ENCODE measurements at regions of chr17 and their contacts with region 1.

Region 1: DNA sequence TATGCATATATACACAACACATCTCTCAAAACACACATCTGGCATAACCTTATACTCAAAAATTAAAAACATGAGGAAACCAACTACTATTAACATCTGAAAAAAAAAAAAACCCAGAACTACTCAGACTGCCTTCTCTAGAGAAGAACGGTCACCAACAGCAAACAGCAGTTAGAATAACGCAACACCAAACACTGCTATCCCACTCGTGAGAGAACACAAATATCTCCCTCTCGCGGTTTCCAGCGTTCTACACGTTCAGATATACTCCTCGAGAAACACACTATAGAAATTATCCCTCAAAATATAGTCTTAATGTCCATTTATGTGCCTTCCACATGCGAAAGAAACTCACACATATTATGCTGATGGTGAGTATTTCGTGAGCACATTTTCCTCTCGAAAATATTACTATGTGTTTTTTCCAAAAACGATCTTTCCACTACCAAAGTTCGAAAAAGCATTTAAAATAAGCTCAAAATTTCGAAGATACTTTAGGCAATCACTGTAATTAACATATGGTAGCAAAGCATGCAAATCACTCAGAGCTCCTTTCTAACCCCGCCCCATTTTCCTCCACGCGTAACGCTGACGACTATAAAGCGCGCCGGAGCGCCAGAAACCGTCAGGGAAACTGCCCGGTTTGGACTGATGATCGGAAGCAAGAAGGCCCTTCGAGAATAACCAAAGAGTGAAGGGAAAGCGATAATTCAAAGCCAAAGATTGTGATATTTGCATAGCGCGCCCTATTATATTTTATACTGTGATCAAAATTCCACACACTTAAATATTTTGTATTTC is 60.1 kb downstream of the TEX14 start:
- DNase-seq: peak; percentile 96
- ATAC-seq: peak; percentile 91
- H3K4me3 Mint-ChIP-seq: no peak overlapping the region
- H3K27ac Mint-ChIP-seq: no peak overlapping the region
- H3K4me1 Mint-ChIP-seq: peaks cover 3% of the 10 kb centered on the region
- H3K27me3 Mint-ChIP-seq: no peaks in the 10 kb centered on the region
- CTCF ChIP-seq: no peak

Region 2: DNA sequence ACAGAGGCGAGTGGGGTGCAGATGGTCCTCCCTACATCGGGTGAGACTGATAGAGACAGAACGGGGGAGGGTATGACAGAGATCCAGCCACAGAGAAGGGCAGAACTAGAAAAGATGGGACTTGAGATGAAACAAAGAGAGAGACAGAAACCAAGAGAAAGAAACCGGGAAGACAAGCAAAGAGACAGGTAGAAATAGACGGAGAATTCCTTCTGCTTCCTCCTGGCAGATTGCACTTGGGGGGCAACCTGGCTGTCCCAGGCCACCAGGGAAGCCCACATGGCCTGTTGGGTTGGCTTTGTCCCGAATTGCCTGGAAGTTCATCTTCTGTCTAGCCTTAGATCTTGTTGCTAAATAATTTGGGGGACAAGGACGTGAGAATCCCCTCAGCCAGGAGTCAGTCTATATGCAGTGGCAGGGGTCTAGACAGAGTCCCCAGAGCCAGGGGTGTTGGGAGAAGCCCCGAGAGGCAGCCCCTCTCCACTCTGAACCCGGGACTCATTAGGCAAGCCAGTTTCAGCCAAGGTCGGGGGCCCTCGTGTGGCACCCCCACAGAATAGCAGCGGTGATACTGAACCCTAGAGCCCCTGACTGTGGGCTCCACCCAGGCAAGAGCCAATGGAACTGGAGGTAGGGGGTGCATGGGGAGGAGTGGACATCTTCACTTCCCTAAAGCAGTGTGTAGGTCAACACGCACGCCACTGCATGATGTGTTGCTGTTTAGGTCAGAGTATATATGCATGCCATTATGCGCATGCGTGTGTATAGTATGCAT is 302.5 kb before region 1 on chr17:
- CTCF ChIA-PET with region 1: no interaction called
- POLR2A ChIA-PET with region 1: interaction called, 19 read pairs
- intact Hi-C with region 1: loop called (anchors 10 kb)
- DNase-seq: peak; percentile 95
- ATAC-seq: peak; percentile 48
- H3K4me3 Mint-ChIP-seq: peak overlapping the region; percentile 81
- H3K27ac Mint-ChIP-seq: peak overlapping the region; percentile 96
- H3K4me1 Mint-ChIP-seq: peaks cover 40% of the 10 kb centered on the region
- H3K27me3 Mint-ChIP-seq: peaks cover 7% of the 10 kb centered on the region
- CTCF ChIP-seq: peak; percentile 57

Region 3: GRCh38 chr17:58531661-58532554 is 99.8 kb before region 1 on chr17:
- CTCF ChIA-PET with region 1: no interaction called
- POLR2A ChIA-PET with region 1: interaction called, 37 read pairs
- intact Hi-C with region 1: no loop called
- DNase-seq: peak; percentile 50
- ATAC-seq: peak; percentile 89
- H3K4me3 Mint-ChIP-seq: peak overlapping the region; percentile 53
- H3K27ac Mint-ChIP-seq: no peak overlapping the region
- H3K4me1 Mint-ChIP-seq: no peaks in the 10 kb centered on the region
- H3K27me3 Mint-ChIP-seq: peaks cover 39% of the 10 kb centered on the region
- CTCF ChIP-seq: no peak

Region 4: DNA sequence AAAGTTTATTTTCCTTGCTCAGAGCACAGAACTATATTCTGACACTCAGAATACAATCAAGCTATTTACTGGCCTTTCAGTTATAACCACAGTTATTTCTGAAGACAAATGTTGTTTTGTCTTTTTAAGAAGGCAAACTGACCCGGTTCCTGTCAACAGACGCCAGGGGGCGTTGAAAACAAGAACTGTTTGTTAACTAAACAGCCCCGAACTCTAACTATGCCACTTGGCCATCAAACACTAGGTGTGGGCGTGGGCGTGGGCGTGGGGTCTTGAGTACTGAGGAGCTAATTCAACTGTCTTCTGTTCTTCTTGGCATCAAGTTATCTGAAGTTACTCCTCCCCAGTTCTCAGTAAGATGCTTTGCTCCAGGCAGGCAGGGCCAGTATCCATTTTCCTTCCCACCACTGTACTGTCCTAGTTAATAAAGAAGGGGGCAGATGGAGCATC is 54.1 kb before region 1 on chr17:
- CTCF ChIA-PET with region 1: interaction called, 5 read pairs
- POLR2A ChIA-PET with region 1: interaction called, 17 read pairs
- intact Hi-C with region 1: no loop called
- DNase-seq: peak; percentile 65
- ATAC-seq: no peak
- H3K4me3 Mint-ChIP-seq: no peak overlapping the region
- H3K27ac Mint-ChIP-seq: no peak overlapping the region
- H3K4me1 Mint-ChIP-seq: peaks cover 6% of the 10 kb centered on the region
- H3K27me3 Mint-ChIP-seq: no peaks in the 10 kb centered on the region
- CTCF ChIP-seq: peak; percentile 60

Region 5: GRCh38 chr17:58605470-58605869 is 26.3 kb before region 1 on chr17:
- CTCF ChIA-PET with region 1: interaction called, 4 read pairs
- POLR2A ChIA-PET with region 1: interaction called, 42 read pairs
- intact Hi-C with region 1: no loop called
- DNase-seq: no peak
- ATAC-seq: peak; percentile 45
- H3K4me3 Mint-ChIP-seq: no peak overlapping the region
- H3K27ac Mint-ChIP-seq: no peak overlapping the region
- H3K4me1 Mint-ChIP-seq: peaks cover 7% of the 10 kb centered on the region
- H3K27me3 Mint-ChIP-seq: no peaks in the 10 kb centered on the region
- CTCF ChIP-seq: no peak

Region 6: GRCh38 chr17:58648236-58648806 is 16.6 kb after region 1 on chr17:
- CTCF ChIA-PET with region 1: interaction called, 3 read pairs
- POLR2A ChIA-PET with region 1: interaction called, 85 read pairs
- intact Hi-C with region 1: no loop called
- DNase-seq: no peak
- ATAC-seq: peak; percentile 47
- H3K4me3 Mint-ChIP-seq: no peak overlapping the region
- H3K27ac Mint-ChIP-seq: no peak overlapping the region
- H3K4me1 Mint-ChIP-seq: no peaks in the 10 kb centered on the region
- H3K27me3 Mint-ChIP-seq: no peaks in the 10 kb centered on the region
- CTCF ChIP-seq: no peak

Region 7: DNA sequence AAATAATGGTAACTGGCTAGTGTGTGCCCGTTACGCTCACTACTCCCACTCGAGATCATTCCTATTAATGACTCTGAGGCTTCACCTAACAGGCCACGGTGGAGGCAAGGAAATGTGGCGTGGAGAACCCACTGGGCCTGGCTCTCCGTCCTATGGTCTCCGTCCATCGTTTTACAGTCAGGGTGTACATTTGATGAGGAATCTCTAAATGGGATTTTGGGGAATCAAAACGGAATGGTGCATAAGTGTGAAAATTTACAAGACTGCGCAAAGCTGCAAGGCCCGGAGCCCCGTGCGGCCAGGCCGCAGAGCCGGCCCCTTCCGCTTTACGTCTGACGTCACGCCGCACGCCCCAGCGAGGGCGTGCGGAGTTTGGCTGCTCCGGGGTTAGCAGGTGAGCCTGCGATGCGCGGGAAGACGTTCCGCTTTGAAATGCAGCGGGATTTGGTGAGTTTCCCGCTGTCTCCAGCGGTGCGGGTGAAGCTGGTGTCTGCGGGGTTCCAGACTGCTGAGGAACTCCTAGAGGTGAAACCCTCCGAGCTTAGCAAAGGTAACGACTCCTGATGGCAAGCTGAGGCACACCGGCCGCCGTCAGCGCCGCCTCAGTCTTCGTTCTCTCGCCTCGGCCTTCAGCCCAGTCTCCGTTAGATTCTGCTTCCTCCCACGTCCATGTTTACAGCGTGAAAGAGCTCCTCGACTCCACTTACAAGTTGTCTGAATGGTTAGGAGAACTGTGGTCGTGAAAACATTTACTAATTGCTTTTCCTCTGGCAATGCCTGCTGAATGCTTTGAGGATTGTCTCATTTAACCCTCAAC is 60.7 kb after region 1 on chr17 and contains the start of gene RAD51C:
- CTCF ChIA-PET with region 1: no interaction called
- POLR2A ChIA-PET with region 1: interaction called, 78 read pairs
- intact Hi-C with region 1: no loop called
- DNase-seq: peak; percentile 92
- ATAC-seq: peak; percentile 98
- H3K4me3 Mint-ChIP-seq: peak within 1 kb of the TSS; percentile 86
- H3K27ac Mint-ChIP-seq: peak within 1 kb of the TSS; percentile 94
- H3K4me1 Mint-ChIP-seq: peaks cover 23% of the 10 kb centered on the region
- H3K27me3 Mint-ChIP-seq: no peaks in the 10 kb centered on the region
- CTCF ChIP-seq: no peak
- total RNA-seq, gene RAD51C: 73.3 to 76.8 TPM